ENCODE measurements at regions of chr4 and their contacts with region 1.

Region 1: DNA sequence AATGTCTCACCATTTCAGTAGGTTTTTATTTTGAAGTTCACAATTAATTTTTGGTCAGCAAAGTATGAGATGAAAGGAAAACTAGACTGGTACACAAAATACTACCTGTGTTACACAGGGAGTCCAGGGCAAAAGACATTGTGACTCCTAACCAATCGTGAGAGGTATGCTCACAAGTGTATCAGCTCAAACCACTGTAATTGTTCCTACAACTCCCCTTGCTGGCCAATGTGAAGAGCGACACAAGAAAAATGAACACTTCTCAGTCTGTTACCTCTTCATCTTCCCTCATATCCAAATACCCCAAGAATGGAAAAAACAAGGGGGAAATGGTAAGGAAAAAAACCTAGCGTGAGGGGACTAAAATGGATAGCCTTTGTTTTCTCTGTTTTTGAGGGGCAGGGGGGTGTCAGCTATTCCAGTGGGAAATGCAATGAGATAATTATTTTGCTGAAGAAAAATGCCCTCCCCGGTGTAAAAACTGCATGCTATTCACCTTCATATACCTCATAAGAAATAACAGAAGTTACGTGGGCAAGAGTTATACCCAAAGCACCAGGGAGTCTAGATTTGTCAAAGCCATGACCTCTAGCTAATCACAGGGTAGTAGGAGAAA is 30.6 kb upstream of the NSUN7 start:
- DNase-seq: no peak
- H3K4me3 Mint-ChIP-seq: no peak overlapping the region
- H3K27ac Mint-ChIP-seq: peak overlapping the region; percentile 5
- H3K4me1 Mint-ChIP-seq: peaks cover 36% of the 10 kb centered on the region
- H3K27me3 Mint-ChIP-seq: no peaks in the 10 kb centered on the region

Region 2: GRCh38 chr4:40149960-40150385 is 569.1 kb before region 1 on chr4:
- intact Hi-C with region 1: loop called (anchors 10 kb)
- DNase-seq: peak; percentile 67
- H3K4me3 Mint-ChIP-seq: no peak overlapping the region
- H3K27ac Mint-ChIP-seq: peak overlapping the region; percentile 48
- H3K4me1 Mint-ChIP-seq: no peaks in the 10 kb centered on the region
- H3K27me3 Mint-ChIP-seq: no peaks in the 10 kb centered on the region

Region 3: DNA sequence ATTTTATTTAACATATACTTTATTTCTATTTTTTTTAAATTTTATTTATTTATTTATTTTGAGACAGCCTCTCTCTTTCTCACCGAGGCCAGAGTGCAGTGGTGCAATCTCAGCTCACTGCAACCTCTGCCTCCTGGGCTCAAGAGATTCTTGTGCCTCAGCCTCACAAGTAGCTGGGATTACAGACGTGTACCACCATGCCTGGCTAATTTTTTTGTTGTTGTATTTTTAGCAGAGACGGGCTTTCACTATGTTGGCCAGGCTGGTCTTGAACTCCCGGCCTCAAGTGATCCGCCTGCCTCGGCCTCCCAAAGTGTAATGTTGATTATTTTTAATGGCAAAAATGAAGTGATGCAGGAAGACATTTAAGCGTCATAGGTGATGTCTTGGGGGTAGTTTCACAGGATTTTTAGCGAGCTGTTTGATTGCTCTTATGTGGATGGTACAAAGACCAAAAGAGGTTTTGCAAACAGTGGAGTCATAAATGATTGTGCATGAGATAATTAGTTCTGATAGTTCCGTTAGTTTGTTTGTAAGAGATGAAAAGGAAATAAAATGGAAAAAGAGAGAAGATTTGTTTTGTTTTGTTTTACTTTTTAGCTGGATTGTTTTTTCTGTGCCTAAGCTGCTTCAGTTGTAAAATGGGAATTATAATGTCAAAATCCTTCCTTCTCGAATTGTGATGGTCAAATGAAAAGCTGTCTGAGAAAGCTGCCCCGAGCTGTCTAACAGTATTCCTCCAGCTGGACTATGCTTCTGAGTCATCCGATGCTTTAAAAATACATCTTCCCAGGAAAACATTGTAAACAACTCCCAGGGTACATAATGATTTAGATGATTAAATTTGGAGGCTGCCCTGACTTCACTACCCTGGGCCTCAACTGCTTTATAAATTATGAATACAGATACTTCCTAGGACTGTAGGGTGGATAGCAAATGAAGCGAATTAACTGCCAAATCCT is 507.6 kb before region 1 on chr4:
- intact Hi-C with region 1: no loop called
- DNase-seq: no peak
- H3K4me3 Mint-ChIP-seq: peak overlapping the region; percentile 70
- H3K27ac Mint-ChIP-seq: peak overlapping the region; percentile 92
- H3K4me1 Mint-ChIP-seq: peaks cover 84% of the 10 kb centered on the region
- H3K27me3 Mint-ChIP-seq: no peaks in the 10 kb centered on the region

Region 4: DNA sequence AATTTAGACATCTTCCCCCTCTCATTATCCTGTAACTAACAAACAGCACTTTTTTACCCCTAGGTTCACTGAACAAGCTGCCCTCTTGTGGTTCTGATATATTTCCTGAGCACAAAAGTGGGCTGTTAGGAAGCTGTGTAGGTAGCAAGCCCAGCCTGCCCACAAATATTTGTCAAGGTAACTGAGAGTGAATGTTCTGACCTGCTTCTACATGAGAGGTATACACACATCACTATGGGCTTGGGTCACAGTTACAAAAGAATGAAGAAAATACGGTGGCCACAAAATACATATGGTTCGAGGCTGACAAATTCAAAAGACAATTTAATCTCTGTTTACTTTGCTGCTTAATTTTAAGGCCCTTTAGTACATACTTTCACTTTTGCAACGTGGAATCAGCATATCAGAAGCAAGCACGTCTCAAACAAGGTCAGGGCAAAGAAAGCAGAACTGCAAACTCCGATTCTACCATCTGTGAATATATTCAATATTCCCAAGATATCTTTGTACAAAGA is 168.1 kb before region 1 on chr4:
- intact Hi-C with region 1: loop called (anchors 1 kb)
- DNase-seq: peak; percentile 37
- H3K4me3 Mint-ChIP-seq: peak overlapping the region; percentile 84
- H3K27ac Mint-ChIP-seq: peak overlapping the region; percentile 81
- H3K4me1 Mint-ChIP-seq: peaks cover 65% of the 10 kb centered on the region
- H3K27me3 Mint-ChIP-seq: no peaks in the 10 kb centered on the region

Region 5: DNA sequence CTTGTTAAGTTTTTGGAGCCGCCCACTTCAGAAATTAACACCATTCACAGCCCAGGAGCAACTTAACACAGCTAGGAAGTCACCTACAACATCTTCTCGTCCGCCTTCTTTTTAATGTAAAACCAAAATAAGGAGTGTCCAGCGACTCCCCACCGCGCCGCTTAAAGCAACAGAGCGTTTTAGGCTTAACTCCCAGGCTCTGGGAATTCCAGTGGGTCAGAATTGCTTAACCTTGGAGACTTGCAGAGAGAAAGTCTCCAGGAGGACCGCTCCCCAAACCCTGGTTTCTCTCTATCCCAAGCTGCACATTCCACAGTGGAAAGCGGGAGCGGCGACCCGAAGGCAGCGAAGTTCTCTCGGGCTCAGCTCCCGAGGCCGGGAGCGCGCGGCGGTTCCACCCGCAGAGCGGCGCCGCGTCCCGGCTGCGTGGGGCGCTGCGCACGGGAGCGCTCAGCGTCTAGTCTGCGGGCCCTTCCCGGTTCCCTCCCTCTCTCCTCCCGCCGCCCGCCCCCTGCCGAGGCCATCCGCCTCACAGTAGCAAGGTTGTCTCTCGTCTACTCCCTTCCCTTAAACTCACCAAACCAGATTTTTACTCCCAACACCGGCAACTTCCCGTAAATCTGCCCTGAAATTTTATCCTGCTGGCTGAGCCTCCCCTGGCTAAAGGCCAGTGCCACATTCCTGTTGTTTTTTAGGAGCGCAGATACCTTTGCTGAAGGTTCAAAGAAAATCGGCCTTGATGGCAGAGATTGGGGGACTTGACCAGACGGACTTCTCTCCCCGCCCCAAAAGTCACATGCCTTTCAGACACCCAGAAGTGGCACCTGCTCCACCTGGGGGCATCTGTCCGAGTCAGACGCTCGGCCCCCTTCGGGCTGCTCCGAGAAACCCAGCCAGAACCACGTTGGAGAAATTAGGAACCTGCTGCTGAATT is 89.4 kb before region 1 on chr4 and contains the start of gene RBM47:
- intact Hi-C with region 1: loop called (anchors 2 kb)
- DNase-seq: peak; percentile 12
- H3K4me3 Mint-ChIP-seq: peak within 1 kb of the TSS; percentile 92
- H3K27ac Mint-ChIP-seq: peak within 1 kb of the TSS; percentile 84
- H3K4me1 Mint-ChIP-seq: peaks cover 41% of the 10 kb centered on the region
- H3K27me3 Mint-ChIP-seq: peaks cover 2% of the 10 kb centered on the region
- total RNA-seq, gene RBM47: 20.3 and 21.4 TPM in 2 replicates

Region 6: GRCh38 chr4:40672536-40673526 is 46.3 kb before region 1 on chr4:
- intact Hi-C with region 1: loop called (anchors 1 kb)
- DNase-seq: peak; percentile 59
- H3K4me3 Mint-ChIP-seq: peak overlapping the region; percentile 57
- H3K27ac Mint-ChIP-seq: peak overlapping the region; percentile 86
- H3K4me1 Mint-ChIP-seq: peaks cover 68% of the 10 kb centered on the region
- H3K27me3 Mint-ChIP-seq: no peaks in the 10 kb centered on the region

Region 7: DNA sequence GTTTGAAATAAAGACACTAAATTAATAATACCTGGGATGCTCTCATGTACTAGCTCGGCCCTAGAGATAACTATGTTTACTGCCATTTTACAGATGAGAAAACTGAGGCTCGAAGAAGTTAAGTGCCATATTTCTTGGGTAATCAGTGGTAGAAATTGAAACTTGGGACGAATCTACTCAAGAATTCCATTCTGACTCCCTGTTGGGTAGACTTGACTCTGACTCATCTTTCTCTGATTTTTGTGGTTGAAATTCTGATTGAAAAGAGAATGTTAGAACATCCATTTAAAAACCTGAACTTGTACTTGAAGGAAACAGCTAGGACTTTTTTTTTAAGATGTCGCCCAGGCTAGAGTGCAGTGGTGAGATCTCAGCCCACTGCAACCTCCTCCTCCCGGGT is 19.5 kb before region 1 on chr4:
- intact Hi-C with region 1: loop called (anchors 1 kb)
- DNase-seq: no peak
- H3K4me3 Mint-ChIP-seq: peak overlapping the region; percentile 7
- H3K27ac Mint-ChIP-seq: peak overlapping the region; percentile 74
- H3K4me1 Mint-ChIP-seq: peaks cover 34% of the 10 kb centered on the region
- H3K27me3 Mint-ChIP-seq: no peaks in the 10 kb centered on the region

Region 8: DNA sequence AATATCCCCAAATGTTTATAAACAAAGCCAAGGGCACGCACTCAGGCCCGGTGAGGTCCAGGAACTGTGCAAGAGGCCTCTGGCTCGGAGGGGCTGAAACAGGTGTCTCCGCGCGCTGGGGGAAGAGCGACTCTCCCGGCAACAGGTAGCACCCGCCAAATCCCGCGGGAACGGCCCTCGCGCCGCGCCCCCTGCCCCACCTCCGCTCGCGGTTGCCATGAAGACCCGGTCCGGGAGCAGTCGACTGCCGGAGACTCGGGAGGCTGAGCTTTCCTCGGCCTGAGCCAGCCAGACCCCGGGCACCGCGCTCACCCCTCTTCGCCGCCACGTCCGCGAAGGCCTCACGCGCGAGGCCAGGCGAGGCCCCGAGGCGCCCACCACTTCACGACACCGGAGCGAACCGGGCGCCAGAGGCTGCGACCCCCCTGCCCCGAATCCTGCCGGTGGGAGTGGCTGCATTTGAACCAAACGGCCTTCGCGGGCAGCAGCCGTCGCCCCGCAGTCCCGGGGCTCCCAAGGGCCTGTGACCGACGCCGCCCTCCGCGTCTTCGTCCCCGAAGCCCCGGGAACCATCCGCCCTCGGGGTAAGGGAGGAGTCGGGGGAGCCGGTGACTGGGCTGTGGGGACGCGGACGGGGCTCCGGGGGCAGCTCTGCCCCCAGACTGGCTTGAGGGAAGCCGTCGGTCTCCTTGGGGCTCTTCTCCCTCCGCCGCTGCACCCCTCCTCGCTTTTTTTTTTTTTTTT is 30.8 kb after region 1 on chr4 and contains the start of gene NSUN7:
- intact Hi-C with region 1: no loop called
- DNase-seq: peak; percentile 10
- H3K4me3 Mint-ChIP-seq: peak within 1 kb of the TSS; percentile 68
- H3K27ac Mint-ChIP-seq: no peak within 1 kb of the TSS
- H3K4me1 Mint-ChIP-seq: peaks cover 12% of the 10 kb centered on the region
- H3K27me3 Mint-ChIP-seq: peaks cover 39% of the 10 kb centered on the region
- total RNA-seq, gene NSUN7: 0.23 and 0.66 TPM in 2 replicates

Measured in activated T-helper 1 cell treated with anti-CD3 and anti-CD28 coated beads, Interleukin-12 subunit alpha, Interleukin-12 subunit beta, Interleukin-2, Interleukin-4 antibody, amounts not matched to agents 30 ng/mL and 10 ng/mL and 1 ng/mL, durations not matched to agents 14 hours and 24 hours and 36 hours (primary cell).